Dendritic cell treated with granulocyte-macrophage colony-stimulating factor and Interleukin-4, amounts not matched to agents 40 ng/mL and 50 ng/mL, for 4 days (primary cell): ENCODE measurements at regions of chr11 and their contacts with region 1.

Region 1: GRCh38 chr11:64846998-64847666 is 2.7 kb upstream of the CDC42BPG start:
- H3K4me3 Mint-ChIP-seq: no peak overlapping the region
- H3K27ac Mint-ChIP-seq: no peak overlapping the region
- H3K4me1 Mint-ChIP-seq: peaks cover 52% of the 10 kb centered on the region
- H3K27me3 Mint-ChIP-seq: peaks cover 30% of the 10 kb centered on the region

Region 2: DNA sequence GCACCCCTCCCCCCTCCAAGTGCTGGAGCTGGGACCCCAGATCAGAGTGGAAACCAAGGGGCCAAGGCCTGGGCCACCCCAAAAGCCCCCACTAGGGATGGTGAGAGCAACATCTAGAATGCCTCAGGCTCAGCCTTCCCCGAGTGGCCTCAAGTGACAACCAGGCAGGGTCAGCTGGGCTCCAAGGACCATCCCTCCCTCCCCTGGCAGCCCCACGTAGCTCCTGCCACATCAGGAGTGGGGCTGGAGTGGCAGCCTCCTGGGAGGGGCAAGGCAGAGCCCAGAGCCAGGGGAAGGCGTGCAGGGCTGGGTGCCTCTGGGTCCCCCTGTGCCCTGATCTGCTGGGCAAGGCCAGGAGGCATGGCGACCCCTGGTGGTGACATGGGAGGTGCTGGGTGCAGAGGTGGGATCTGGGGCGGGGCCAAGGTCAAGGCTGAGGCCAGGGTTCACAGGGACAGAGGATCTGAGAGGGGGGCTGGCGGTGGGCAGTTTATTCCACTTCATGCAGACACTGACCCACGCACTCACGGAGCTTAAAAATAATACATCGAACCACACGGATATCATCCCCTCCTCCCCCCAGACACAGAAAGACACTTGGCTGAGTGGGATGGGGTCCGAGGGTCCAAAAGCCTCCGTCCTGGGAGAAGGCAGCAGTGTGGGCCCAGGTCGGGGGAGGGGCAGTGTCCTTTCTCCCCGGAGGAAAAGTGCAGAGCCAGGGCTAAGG is 47.1 kb after region 1 on chr11:
- intact Hi-C with region 1: loop called (anchors 1 kb)
- H3K4me3 Mint-ChIP-seq: no peak overlapping the region
- H3K27ac Mint-ChIP-seq: no peak overlapping the region
- H3K4me1 Mint-ChIP-seq: peaks cover 5% of the 10 kb centered on the region
- H3K27me3 Mint-ChIP-seq: peaks cover 34% of the 10 kb centered on the region

Region 3: DNA sequence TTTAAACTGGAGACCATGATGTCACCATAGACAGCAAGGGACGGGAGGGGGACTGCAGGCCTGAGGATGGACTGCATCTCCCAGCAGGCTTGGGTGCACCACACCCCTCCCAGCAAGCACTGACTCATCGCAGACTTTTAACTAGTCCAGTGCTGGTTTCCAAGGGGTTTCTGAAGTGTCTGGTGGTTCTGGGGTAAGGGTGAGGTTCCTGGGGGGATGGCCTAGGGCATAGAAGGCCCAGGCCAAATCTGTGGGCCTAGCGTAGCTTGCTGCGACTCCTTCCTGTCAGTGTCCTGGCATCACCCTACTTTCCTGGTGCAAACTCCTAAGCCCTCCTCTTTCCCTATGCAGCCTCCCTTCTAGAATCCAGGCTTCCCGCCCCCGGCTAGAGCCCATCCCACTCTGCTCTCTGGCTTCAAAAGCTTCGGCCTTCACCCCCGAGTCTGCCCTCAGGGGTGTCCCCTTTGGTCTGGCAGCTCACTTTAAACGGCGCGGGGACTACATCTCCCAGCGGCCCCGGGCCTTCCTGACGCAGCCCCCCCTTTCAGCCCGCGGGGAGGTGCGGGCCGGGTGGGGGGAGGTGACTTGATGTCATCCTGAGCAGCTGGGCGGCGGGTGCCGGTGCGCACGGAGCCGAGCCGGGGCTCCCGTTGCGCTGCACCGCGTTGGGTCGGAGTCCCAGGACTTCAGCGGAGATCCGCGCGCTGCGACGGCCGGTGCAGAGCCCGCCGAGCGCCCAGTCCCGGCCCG is 77.1 kb after region 1 on chr11 and contains the start of gene PPP2R5B:
- intact Hi-C with region 1: loop called (anchors 2 kb)
- H3K4me3 Mint-ChIP-seq: peak within 1 kb of the TSS; percentile 99
- H3K27ac Mint-ChIP-seq: peak within 1 kb of the TSS; percentile 98
- H3K4me1 Mint-ChIP-seq: peaks cover 20% of the 10 kb centered on the region
- H3K27me3 Mint-ChIP-seq: peaks cover 9% of the 10 kb centered on the region

Region 4: DNA sequence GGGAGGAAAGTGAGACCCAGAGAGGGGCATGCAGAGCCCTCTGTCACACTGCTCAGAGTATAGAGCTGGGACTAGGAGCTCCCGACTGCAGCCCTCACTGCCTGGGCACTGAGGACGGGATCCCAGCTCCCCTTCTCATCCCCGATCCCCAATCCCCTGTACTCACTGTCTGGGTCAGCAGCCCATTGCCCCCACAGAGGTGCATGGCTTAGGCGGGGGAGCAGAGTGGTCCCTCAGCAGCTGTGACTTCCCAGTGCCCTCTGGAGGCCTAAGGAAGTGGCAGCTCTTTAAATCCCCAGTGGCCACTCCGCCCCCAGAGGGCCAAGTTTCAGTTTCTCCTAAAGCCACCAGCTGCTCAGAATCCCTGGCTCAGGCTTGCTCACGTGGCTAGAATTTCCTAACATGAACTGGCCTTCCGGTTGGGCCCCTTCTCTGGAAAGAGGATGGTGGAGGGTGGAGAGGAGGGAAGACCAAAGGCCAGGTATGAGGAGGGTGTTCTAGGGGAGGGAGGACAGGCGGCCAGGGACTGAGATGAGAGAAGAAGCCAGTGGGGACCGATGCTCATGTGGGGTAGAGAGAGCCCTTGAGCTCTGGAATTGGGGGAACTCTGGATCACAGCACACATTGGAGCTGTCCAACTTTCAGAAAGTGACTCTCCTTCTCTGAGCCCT is 149.7 kb after region 1 on chr11 and contains the start of gene BATF2:
- intact Hi-C with region 1: loop called (anchors 5 kb)
- H3K4me3 Mint-ChIP-seq: peak within 1 kb of the TSS; percentile 88
- H3K27ac Mint-ChIP-seq: peak within 1 kb of the TSS; percentile 85
- H3K4me1 Mint-ChIP-seq: peaks cover 31% of the 10 kb centered on the region
- H3K27me3 Mint-ChIP-seq: peaks cover 5% of the 10 kb centered on the region

Region 5: DNA sequence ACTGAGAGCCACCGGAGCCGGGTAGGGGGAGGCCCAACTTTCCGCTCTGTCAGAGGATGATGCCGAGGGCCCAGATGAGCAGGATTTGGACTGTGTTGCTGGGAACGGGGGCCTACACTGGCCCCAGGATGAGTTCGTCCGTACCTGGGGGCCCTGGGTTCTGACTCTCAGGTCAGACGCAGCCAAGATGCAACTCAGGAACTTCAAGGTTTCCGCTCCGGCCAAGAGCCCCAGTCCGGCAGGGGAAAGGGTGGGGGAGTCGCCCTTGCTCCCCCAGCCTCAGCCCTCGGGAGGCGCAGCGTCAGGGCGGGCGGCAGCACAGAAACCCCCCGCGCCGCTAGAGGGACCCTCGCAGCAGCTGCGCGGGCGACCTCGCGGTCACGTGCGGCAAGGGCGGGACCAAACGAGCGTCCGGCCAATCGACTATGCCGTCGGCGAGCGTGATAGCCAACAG is 166.6 kb after region 1 on chr11:
- intact Hi-C with region 1: loop called (anchors 5 kb)
- H3K4me3 Mint-ChIP-seq: peak overlapping the region; percentile 89
- H3K27ac Mint-ChIP-seq: peak overlapping the region; percentile 97
- H3K4me1 Mint-ChIP-seq: peaks cover 31% of the 10 kb centered on the region
- H3K27me3 Mint-ChIP-seq: no peaks in the 10 kb centered on the region

Region 6: GRCh38 chr11:65187971-65188461 is 340.9 kb after region 1 on chr11:
- intact Hi-C with region 1: no loop called
- H3K4me3 Mint-ChIP-seq: no peak overlapping the region
- H3K27ac Mint-ChIP-seq: no peak overlapping the region
- H3K4me1 Mint-ChIP-seq: peaks cover 60% of the 10 kb centered on the region
- H3K27me3 Mint-ChIP-seq: no peaks in the 10 kb centered on the region